Posterior cingulate gyrus (tissue), 11 donors: ENCODE measurements at regions of chr6 and their contacts with region 1.

Region 1: GRCh38 chr6:148342357-148343046 is at the start of gene SASH1:
- DNase-seq: peak; percentile 45 to 94 (median 64)

Region 2: GRCh38 chr6:148520109-148520841 is 177.8 kb after region 1 on chr6:
- intact Hi-C with region 1: loop called (anchors 10 kb)
- DNase-seq: peak in 1 of 10 donors; percentile 80

Region 3: DNA sequence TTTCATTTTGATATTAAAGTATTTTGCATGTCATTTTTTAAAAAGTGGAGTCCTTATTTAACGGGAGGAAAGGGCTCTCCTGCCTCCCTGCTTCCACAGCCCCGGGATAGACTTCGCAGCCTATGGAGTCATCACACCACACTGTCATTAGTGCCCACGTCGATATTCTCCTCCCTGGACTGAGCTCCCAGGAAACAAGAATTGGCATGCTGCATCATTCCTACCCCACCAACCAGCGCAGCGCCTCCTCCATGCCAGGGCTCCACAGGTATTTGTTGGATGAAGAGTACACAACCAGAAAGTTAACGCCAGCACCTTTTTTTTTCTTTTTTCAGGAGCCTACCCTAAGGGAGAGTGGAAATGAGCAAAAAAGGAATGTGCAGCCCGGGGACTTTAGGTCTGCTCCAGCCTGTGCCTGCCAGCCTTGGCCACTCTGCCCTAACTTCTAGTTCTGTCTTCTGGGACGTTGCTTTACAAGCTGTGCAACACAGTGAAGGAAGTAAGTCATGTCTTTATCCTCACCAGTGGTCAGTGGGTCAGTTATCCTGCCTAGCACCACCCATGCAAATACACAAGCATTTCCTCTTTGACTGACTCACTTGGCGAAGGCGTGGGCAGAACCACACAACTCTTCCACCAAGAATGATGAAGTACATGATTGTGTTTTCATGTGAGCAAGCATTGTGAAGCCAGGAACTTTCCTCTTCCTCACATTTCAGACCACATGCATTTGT is 223.6 kb after region 1 on chr6:
- intact Hi-C with region 1: no loop called
- DNase-seq: no peak